Naive thymus-derived CD4-positive, alpha-beta T cell (primary cell): ENCODE measurements at regions of chr1 and their contacts with region 1.

Region 1: GRCh38 chr1:111222308-111223125 is 5.0 kb upstream of the CHI3L2 start:
- DNase-seq: peak in 8 of 9 donors; percentile 51 to 83 (median 62)
- ATAC-seq: peak; percentile 62
- H3K4me3 ChIP-seq: peak overlapping the region; percentile 55
- H3K4me3 Mint-ChIP-seq: peak overlapping the region; percentile 77 to 92 (median 84)
- H3K27ac ChIP-seq: peak overlapping the region; percentile 77
- H3K27ac Mint-ChIP-seq: peak overlapping the region; percentile 85 to 100 (median 97)
- H3K4me1 ChIP-seq: peaks cover 92% of the 10 kb centered on the region in 2 donors
- H3K4me1 Mint-ChIP-seq: peaks cover 78 to 100% (median 97%) of the 10 kb centered on the region in 7 donors
- H3K27me3 ChIP-seq: no peaks in the 10 kb centered on the region
- H3K27me3 Mint-ChIP-seq: no peaks in the 10 kb centered on the region

Region 2: GRCh38 chr1:110780600-110781484 is 441.7 kb before region 1 on chr1:
- CTCF ChIA-PET with region 1: no interaction called
- POLR2A ChIA-PET with region 1: no interaction called
- intact Hi-C with region 1: loop called in 1 of 2 experiments (anchors 5 kb)
- DNase-seq: peak; percentile 48 to 83 (median 74)
- ATAC-seq: peak; percentile 88
- H3K4me3 ChIP-seq: no peak overlapping the region
- H3K4me3 Mint-ChIP-seq: peak overlapping the region in 5 of 10 donors; percentile 29 to 61 (median 42)
- H3K27ac ChIP-seq: no peak overlapping the region
- H3K27ac Mint-ChIP-seq: peak overlapping the region in 5 of 9 donors; percentile 2 to 82 (median 34)
- H3K4me1 ChIP-seq: peaks cover 31 to 40% of the 10 kb centered on the region in 2 donors
- H3K4me1 Mint-ChIP-seq: peaks cover 18 to 54% (median 45%) of the 10 kb centered on the region in 7 donors
- H3K27me3 ChIP-seq: no peaks in the 10 kb centered on the region
- H3K27me3 Mint-ChIP-seq: peaks cover 0 to 28% (median 0%) of the 10 kb centered on the region in 5 donors

Region 3: DNA sequence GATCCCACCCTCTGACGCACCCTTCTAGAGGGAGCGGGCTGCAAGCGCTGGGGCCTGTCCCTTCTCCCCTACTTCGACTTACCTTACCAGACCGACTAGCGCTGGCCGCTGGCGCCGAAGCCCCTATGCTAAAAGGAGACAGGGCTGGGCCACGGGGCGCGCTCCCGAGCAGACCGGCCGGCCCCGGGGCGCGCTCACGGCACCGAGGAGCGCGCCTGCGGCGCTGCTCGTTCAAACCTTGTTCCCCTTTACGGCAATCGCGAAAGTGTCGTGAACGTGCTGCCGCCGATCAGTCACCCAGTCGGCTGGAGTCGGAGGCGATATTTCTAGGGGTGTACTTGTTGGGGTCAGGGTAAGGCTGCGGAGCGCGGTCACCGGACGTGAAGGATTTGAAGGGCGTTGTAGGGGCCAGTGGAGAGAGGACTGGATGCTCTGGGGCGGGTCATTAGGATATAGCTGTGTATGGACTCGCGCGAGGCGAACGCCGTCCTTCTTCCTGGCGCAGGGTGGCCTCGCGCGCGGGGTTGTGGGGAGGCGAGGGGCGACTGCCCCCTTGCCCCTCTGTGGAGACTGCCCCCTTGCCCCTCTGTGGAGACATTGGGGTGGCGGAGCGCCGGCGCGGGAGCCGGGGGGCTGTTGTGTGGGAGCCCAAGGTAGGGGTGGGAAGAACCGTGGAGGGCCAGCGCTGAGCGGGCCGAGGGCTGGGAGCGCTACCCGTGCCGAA is 82.4 kb before region 1 on chr1 and contains the starts of genes CEPT1 and DRAM2:
- CTCF ChIA-PET with region 1: interaction called, 4 read pairs
- POLR2A ChIA-PET with region 1: interaction called, 34 read pairs
- intact Hi-C with region 1: loop called (anchors 1 kb)
- DNase-seq: peak; percentile 77 to 93 (median 89)
- ATAC-seq: peak; percentile 95
- H3K4me3 ChIP-seq: peak within 1 kb of the TSS; percentile 91
- H3K4me3 Mint-ChIP-seq: peak within 1 kb of the TSS; percentile 87 to 100 (median 98)
- H3K27ac ChIP-seq: peak within 1 kb of the TSS; percentile 93
- H3K27ac Mint-ChIP-seq: peak within 1 kb of the TSS; percentile 91 to 100 (median 97)
- H3K4me1 ChIP-seq: peaks cover 18 to 22% of the 10 kb centered on the region in 2 donors
- H3K4me1 Mint-ChIP-seq: peaks cover 40 to 75% (median 57%) of the 10 kb centered on the region in 7 donors
- H3K27me3 ChIP-seq: no peaks in the 10 kb centered on the region
- H3K27me3 Mint-ChIP-seq: no peaks in the 10 kb centered on the region
- total RNA-seq, gene CEPT1: 39.1 to 57.5 (median 40.2) TPM
- total RNA-seq, gene DRAM2: 26.9 to 51.6 (median 43.5) TPM

Region 4: DNA sequence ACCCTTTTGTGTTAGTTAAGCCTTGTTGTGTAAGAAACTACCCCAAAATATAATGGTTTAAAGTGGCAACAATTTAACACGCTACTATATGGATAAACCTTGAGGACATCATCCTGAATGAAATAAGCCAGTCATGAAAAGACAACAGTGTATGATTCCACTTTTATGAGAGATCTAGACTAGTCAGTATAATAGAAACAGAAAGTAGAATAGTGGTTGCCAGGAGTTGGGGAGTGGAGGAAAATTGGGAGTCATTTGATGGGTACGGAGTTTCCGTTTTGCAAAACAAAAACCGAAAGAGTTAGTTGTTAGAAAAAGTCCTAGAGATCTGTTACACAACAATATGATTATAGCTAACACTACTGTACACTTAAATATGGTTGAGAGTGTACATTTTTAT is 52.1 kb after region 1 on chr1:
- CTCF ChIA-PET with region 1: no interaction called
- POLR2A ChIA-PET with region 1: no interaction called
- intact Hi-C with region 1: loop called (anchors 2 to 5 kb)
- DNase-seq: no peak
- ATAC-seq: no peak
- H3K4me3 ChIP-seq: no peak overlapping the region
- H3K4me3 Mint-ChIP-seq: peak overlapping the region in 1 of 10 donors; percentile 24
- H3K27ac ChIP-seq: no peak overlapping the region
- H3K27ac Mint-ChIP-seq: peak overlapping the region in 1 of 9 donors; percentile 11
- H3K4me1 ChIP-seq: no peaks in the 10 kb centered on the region
- H3K4me1 Mint-ChIP-seq: peaks cover 8 to 29% (median 13%) of the 10 kb centered on the region in 7 donors
- H3K27me3 ChIP-seq: peaks cover 5 to 6% of the 10 kb centered on the region in 2 donors
- H3K27me3 Mint-ChIP-seq: peaks cover 10 to 35% (median 29%) of the 10 kb centered on the region in 5 donors

Region 5: DNA sequence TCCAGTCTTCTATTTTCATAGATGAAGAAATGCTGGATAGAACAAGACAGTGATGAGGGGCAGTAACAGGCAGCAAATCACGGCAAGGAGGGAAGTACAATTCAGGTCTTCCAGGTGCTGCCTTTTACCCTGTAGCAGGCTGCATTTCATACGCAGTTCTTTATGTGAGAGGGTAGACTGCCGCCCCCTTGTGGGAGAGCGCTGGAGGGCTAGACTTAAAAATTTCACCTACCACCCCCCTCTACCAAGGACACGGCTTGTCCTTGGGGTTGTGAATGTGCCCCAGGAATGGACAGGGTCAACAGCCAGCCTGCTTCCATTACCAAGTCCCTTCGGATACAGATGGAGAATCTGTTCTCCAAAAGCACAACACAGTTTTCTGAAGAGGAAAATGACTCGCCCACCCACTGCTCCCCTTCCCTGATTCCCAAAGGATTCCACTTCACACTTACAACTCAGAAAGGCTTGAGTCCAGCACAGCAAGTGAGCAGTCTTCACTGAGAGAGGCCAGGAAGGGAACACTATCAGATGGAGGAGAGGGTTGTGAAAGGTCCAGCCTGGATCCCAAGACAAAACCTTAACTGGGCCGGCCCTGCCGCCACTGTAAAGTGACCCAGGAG is 219.2 kb after region 1 on chr1:
- CTCF ChIA-PET with region 1: interaction called, 5 read pairs
- POLR2A ChIA-PET with region 1: no interaction called
- intact Hi-C with region 1: loop called (anchors 1 to 2 kb)
- DNase-seq: peak; percentile 44 to 75 (median 67)
- ATAC-seq: peak; percentile 95
- H3K4me3 ChIP-seq: no peak overlapping the region
- H3K4me3 Mint-ChIP-seq: no peak overlapping the region
- H3K27ac ChIP-seq: peak overlapping the region; percentile 47
- H3K27ac Mint-ChIP-seq: peak overlapping the region in 8 of 9 donors; percentile 49 to 90 (median 84)
- H3K4me1 ChIP-seq: peaks cover 4 to 7% of the 10 kb centered on the region in 2 donors
- H3K4me1 Mint-ChIP-seq: peaks cover 8 to 49% (median 34%) of the 10 kb centered on the region in 7 donors
- H3K27me3 ChIP-seq: no peaks in the 10 kb centered on the region
- H3K27me3 Mint-ChIP-seq: no peaks in the 10 kb centered on the region

Region 6: GRCh38 chr1:111619635-111620440 is 397.3 kb after region 1 on chr1 and contains the start of gene RAP1A:
- CTCF ChIA-PET with region 1: no interaction called
- POLR2A ChIA-PET with region 1: no interaction called
- intact Hi-C with region 1: loop called in 1 of 2 experiments (anchors 5 kb)
- DNase-seq: peak; percentile 80 to 95 (median 90)
- ATAC-seq: peak; percentile 93
- H3K4me3 ChIP-seq: peak within 1 kb of the TSS; percentile 88
- H3K4me3 Mint-ChIP-seq: peak within 1 kb of the TSS; percentile 93 to 99 (median 96)
- H3K27ac ChIP-seq: peak within 1 kb of the TSS; percentile 91
- H3K27ac Mint-ChIP-seq: peak within 1 kb of the TSS; percentile 86 to 98 (median 95)
- H3K4me1 ChIP-seq: peaks cover 46 to 64% of the 10 kb centered on the region in 2 donors
- H3K4me1 Mint-ChIP-seq: peaks cover 57 to 82% (median 76%) of the 10 kb centered on the region in 7 donors
- H3K27me3 ChIP-seq: no peaks in the 10 kb centered on the region
- H3K27me3 Mint-ChIP-seq: no peaks in the 10 kb centered on the region
- total RNA-seq, gene RAP1A: 89.8 to 183 (median 107) TPM